SK-N-SH (cell line): ENCODE measurements at regions of chr1 and their contacts with region 1.

Region 1: GRCh38 chr1:44036409-44037139 is 5.3 kb upstream of the SLC6A9 start:
- DNase-seq: peak; percentile 79
- H3K4me3 ChIP-seq: no peak overlapping the region; a peak in 1 of 4 replicates
- H3K27ac ChIP-seq: peak overlapping the region in 1 of 2 experiments; percentile 74; a peak in 2 of 4 replicates
- H3K4me1 ChIP-seq: peaks cover 14 to 35% of the 10 kb centered on the region in 2 experiments; a peak in 3 of 4 replicates
- H3K27me3 ChIP-seq: no peaks in the 10 kb centered on the region
- CTCF ChIP-seq: peak; percentile 85
- EP300 ChIP-seq: no peak
- RAD21 ChIP-seq: peak; percentile 89

Region 2: GRCh38 chr1:44012941-44013609 is 23.5 kb before region 1 on chr1:
- CTCF ChIA-PET with region 1: interaction called, 77 read pairs
- POLR2A ChIA-PET with region 1: no interaction called
- DNase-seq: no peak
- H3K4me3 ChIP-seq: no peak overlapping the region
- H3K27ac ChIP-seq: no peak overlapping the region
- H3K4me1 ChIP-seq: peaks cover 3 to 6% of the 10 kb centered on the region in 2 experiments; a peak in 2 of 4 replicates
- H3K27me3 ChIP-seq: no peaks in the 10 kb centered on the region
- CTCF ChIP-seq: no peak
- EP300 ChIP-seq: no peak
- RAD21 ChIP-seq: no peak

Region 3: DNA sequence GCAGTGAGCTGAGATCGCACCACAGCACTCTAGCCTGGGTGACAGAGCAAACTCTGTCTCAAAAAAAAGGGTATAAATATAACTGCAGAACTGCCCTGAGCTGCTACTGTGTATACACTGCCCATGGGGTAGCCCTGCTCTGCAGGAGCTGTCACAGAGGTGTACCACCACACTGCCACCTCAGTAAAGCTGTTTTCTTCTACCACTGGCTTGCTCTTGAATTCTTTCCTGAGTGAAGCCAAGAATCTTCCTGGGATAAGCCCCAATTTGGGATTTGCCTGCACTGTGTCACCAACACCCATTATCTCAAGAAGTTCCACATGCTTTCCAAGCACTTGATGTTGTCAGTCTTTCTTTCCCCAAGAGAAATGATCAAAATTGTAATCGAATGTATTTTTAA is 25.3 kb after region 1 on chr1:
- CTCF ChIA-PET with region 1: no interaction called
- POLR2A ChIA-PET with region 1: no interaction called
- DNase-seq: no peak
- H3K4me3 ChIP-seq: no peak overlapping the region
- H3K27ac ChIP-seq: no peak overlapping the region
- H3K4me1 ChIP-seq: no peaks in the 10 kb centered on the region
- H3K27me3 ChIP-seq: no peaks in the 10 kb centered on the region
- CTCF ChIP-seq: no peak
- EP300 ChIP-seq: no peak
- RAD21 ChIP-seq: no peak

Region 4: GRCh38 chr1:44275991-44276405 is 239.4 kb after region 1 on chr1:
- CTCF ChIA-PET with region 1: no interaction called
- POLR2A ChIA-PET with region 1: no interaction called
- DNase-seq: no peak
- H3K4me3 ChIP-seq: no peak overlapping the region
- H3K27ac ChIP-seq: no peak overlapping the region
- H3K4me1 ChIP-seq: no peaks in the 10 kb centered on the region; a peak in 1 of 4 replicates
- H3K27me3 ChIP-seq: no peaks in the 10 kb centered on the region
- CTCF ChIP-seq: no peak
- EP300 ChIP-seq: no peak
- RAD21 ChIP-seq: no peak